ENCODE measurements at regions of chr18 and their contacts with region 1.

Region 1: DNA sequence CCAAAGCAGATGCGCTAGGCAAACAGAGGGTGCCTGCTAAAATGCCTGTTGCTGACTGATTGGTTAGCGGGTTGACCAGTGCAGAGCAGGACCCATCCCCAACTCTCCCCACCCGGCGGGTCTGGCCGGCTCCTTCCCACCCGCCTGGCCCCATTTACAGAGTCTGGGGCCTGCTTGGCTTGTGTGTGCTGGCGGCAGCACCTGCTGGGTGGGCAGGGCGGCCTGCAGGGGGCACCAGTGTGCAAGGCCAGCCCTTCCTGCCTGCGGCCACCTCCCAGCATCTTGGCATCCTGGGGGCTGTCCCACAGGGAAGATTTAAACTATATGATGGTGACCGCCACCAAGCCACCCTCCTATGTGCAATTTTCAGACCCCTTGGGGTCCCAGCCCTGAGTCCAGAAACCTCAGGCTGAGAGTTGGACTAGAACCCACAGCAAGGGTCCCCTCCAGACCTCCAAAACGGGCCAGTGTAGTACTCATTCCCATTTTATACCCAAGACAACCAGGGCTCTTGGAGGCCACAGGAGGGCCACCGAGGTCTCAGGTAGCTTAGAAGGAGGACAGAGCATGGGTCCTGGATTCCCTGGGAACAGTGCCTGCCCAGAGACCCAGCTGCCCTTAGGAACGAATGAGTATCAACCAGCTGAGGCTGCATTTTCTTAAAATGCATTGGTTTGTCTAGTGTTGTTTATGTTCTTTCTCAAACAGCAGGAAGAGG is 173.6 kb downstream of the SMAD7 start:
- DNase-seq: peak; percentile 46
- H3K4me3 ChIP-seq: no peak overlapping the region
- H3K27ac ChIP-seq: no peak overlapping the region
- H3K4me1 ChIP-seq: peaks cover 22% of the 10 kb centered on the region
- H3K27me3 ChIP-seq: no peaks in the 10 kb centered on the region
- CTCF ChIP-seq: peak; percentile 93 to 95
- POLR2A ChIP-seq: no peak

Region 2: DNA sequence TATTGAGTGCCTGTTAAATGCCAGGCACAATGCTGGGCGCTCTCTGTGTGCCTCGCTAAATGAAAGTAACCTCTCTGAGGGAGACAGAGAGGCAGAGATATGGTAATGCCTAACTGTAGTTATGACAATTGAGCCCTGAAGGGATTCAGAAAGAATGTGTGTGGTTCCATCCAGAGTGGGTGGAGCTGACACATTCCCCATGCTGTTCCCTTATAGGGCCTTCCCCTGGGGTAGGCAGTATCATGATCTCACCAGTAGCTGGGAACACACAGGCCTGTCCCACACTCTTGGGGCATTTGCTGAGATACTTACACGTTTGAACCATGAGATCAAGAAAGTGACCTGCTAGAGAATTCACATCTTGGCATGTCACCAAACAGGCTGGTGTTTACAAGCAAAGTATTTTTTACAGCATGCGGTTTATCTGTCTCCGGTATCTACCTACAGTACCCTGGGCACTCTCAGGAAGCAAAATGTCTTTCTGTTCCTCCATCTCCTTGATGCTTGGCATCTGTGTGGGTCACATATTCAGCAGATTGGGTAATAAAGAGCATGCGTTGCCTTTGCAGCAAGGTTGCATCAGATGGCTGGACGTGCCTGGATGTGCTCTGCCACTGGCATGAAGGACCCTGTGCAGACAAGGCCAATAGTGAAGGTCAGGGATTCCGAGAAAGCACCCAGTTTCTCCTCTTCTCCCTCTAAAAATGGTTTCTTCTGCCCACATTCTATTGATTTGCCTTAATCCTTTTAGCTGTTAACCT is 229.0 kb before region 1 on chr18:
- CTCF ChIA-PET with region 1: no interaction called
- POLR2A ChIA-PET with region 1: no interaction called
- dilution Hi-C with region 1: no loop called
- intact Hi-C with region 1: no loop called
- DNase-seq: no peak
- H3K4me3 ChIP-seq: no peak overlapping the region
- H3K27ac ChIP-seq: no peak overlapping the region
- H3K4me1 ChIP-seq: peaks cover 25% of the 10 kb centered on the region
- H3K27me3 ChIP-seq: no peaks in the 10 kb centered on the region
- CTCF ChIP-seq: no peak
- POLR2A ChIP-seq: no peak

Region 3: GRCh38 chr18:48711651-48712486 is 65.3 kb before region 1 on chr18:
- CTCF ChIA-PET with region 1: interaction called, 5 read pairs
- POLR2A ChIA-PET with region 1: no interaction called
- dilution Hi-C with region 1: no loop called
- intact Hi-C with region 1: loop called (anchors 2 kb)
- DNase-seq: peak; percentile 51
- H3K4me3 ChIP-seq: no peak overlapping the region
- H3K27ac ChIP-seq: no peak overlapping the region
- H3K4me1 ChIP-seq: peaks cover 35% of the 10 kb centered on the region
- H3K27me3 ChIP-seq: no peaks in the 10 kb centered on the region
- CTCF ChIP-seq: peak; percentile 45 to 56
- POLR2A ChIP-seq: no peak

Region 4: DNA sequence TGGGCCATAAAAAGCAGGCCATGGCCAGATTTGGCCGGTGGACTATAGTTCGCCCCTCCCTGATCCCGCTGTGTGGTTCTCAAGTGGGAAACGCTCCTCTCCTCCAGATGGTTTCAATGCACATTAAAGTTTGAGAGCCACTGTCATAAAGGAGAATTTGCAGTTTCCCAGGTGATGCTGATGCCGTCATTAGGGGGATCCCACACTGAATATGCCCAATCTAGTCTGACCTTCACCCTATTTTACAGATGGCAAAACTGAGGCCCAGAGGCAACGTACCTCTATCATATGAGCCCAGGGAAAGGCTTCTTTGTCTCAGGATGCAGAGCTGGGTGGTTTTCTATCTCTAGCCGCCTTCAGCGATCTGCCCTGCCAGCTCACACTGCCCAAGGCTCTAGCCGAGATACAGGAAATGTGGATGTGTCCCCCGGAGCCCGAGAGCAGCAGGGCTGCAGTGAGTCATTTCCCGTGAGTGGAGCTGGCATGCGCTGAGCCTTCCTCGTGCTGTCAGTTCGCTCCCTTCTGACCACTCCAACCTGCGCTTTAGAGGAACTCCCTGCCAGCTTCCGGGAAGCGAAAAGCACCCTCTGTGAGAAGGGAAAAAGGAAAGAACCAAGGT is 57.3 kb after region 1 on chr18:
- CTCF ChIA-PET with region 1: interaction called, 7 read pairs
- POLR2A ChIA-PET with region 1: no interaction called
- dilution Hi-C with region 1: no loop called
- intact Hi-C with region 1: loop called (anchors 2 kb)
- DNase-seq: peak; percentile 90
- H3K4me3 ChIP-seq: no peak overlapping the region
- H3K27ac ChIP-seq: peak overlapping the region; percentile 30
- H3K4me1 ChIP-seq: peaks cover 36% of the 10 kb centered on the region
- H3K27me3 ChIP-seq: no peaks in the 10 kb centered on the region
- CTCF ChIP-seq: no peak
- POLR2A ChIP-seq: no peak

Region 5: GRCh38 chr18:48902023-48902855 is 125.1 kb after region 1 on chr18:
- CTCF ChIA-PET with region 1: interaction called, 10 read pairs
- POLR2A ChIA-PET with region 1: no interaction called
- dilution Hi-C with region 1: no loop called
- intact Hi-C with region 1: loop called (anchors 2 kb)
- DNase-seq: peak; percentile 96
- H3K4me3 ChIP-seq: no peak overlapping the region
- H3K27ac ChIP-seq: peak overlapping the region; percentile 99
- H3K4me1 ChIP-seq: peaks cover 26% of the 10 kb centered on the region
- H3K27me3 ChIP-seq: no peaks in the 10 kb centered on the region
- CTCF ChIP-seq: peak; percentile 9 to 22
- POLR2A ChIP-seq: peak; percentile 53

Region 6: GRCh38 chr18:49238433-49239042 is 461.4 kb after region 1 on chr18:
- CTCF ChIA-PET with region 1: interaction called, 26 read pairs
- POLR2A ChIA-PET with region 1: no interaction called
- dilution Hi-C with region 1: no loop called
- intact Hi-C with region 1: loop called (anchors 1 kb)
- DNase-seq: peak; percentile 53
- H3K4me3 ChIP-seq: no peak overlapping the region
- H3K27ac ChIP-seq: no peak overlapping the region
- H3K4me1 ChIP-seq: peaks cover 3% of the 10 kb centered on the region
- H3K27me3 ChIP-seq: no peaks in the 10 kb centered on the region
- CTCF ChIP-seq: peak; percentile 42 to 48
- POLR2A ChIP-seq: no peak